Transverse colon (tissue), 4 donors: ENCODE measurements at regions of chr11 and their contacts with region 1.

Region 1: DNA sequence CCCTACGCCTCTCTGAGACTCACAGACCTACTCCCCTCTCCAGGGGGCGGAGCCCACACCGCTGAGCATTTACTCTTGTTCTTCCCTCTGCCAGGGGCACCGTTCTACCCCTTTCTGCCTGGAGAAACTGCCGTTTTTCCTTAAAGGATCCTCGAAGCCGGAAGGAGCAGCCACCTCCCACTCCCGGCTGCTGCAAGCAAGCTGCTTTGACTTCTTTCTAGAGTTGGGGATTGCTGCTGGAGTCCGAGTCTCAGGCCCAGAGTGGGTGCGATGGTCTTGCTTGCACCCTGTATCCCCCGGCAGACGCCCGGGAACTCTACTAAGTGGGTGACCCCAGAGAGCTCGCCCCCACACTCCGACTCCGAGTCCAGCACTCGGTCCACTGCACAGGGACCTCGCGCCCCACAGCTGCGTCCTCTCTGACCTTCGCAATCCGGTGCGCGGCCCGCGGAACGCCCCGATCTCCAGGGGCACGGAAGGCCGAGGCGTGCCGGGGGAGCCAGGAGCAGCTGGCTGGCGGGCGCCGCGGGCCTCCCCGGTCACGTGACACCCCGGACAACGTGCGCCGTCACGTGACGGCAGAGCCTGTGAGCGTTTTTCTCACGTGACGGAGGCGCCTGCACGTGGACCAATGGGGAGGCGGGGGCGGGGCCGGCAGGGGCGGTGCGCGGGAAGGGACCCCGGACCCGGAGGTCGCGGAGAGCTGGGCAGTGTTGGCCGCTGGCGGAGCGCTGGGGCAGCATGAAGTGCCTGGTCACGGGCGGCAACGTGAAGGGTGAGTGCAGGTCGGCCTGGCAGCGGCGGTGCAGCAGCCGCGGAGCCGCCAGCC is at the start of gene RAD9A:
- DNase-seq: peak; percentile 97
- H3K4me3 ChIP-seq: peak within 1 kb of the TSS; percentile 69 to 94 (median 84)
- H3K27ac ChIP-seq: peak within 1 kb of the TSS; percentile 86 to 96 (median 91)
- H3K4me1 ChIP-seq: peaks cover 10 to 33% (median 23%) of the 10 kb centered on the region in 4 donors
- H3K27me3 ChIP-seq: no peaks in the 10 kb centered on the region
- CTCF ChIP-seq: no peak
- EP300 ChIP-seq: peak; percentile 21
- POLR2A ChIP-seq: peak; percentile 84
- total RNA-seq, gene RAD9A: 37.8 to 470 (median 95.3) TPM

Region 2: DNA sequence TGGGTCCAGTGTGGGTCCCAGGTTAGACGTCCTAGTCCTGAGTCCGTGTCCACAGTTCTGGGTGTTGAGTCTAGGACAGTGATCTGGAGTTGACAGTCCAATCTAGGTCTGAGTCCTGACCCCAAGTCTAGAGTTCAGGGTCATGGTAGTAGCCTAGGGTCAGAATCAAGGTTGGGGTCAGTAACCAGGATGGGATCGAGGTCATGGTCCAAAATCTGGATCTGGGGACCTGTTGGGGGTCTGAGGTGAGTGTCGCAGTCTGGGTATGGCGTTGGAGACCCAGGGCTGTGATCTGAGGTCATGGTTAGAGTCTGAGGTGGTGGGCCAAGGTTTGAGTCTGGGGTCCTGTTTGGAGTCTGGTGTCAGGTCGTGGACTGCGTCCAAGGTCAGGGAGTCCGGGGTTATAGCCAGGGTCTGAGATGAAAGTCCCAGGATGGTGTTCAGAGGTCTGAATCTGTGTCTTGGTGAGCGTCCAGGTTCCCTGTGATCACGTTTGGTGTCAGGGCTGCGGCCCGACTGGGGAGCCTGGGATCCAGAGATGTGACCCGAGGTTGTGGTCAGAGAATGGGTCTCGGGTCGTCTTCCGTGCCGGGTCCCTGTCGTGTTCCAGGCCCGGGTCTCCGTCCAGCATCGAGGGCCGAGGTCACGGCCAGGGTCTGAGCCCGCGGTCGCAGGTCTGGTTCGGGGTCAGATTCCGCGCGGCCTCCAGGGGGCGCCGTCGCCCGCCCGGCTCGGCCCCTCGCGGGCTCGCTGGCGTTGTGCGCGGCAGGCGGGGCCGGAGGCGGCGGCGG is 125.7 kb before region 1 on chr11:
- in situ Hi-C with region 1: loop called in 1 of 4 experiments (anchors 25 kb)
- intact Hi-C with region 1: no loop called
- DNase-seq: peak; percentile 85
- H3K4me3 ChIP-seq: no peak overlapping the region
- H3K27ac ChIP-seq: peak overlapping the region; percentile 68 to 78 (median 74)
- H3K4me1 ChIP-seq: peaks cover 45 to 70% (median 63%) of the 10 kb centered on the region in 4 donors
- H3K27me3 ChIP-seq: no peaks in the 10 kb centered on the region
- CTCF ChIP-seq: peak; percentile 67 to 86 (median 72)
- EP300 ChIP-seq: no peak
- POLR2A ChIP-seq: no peak

Region 3: DNA sequence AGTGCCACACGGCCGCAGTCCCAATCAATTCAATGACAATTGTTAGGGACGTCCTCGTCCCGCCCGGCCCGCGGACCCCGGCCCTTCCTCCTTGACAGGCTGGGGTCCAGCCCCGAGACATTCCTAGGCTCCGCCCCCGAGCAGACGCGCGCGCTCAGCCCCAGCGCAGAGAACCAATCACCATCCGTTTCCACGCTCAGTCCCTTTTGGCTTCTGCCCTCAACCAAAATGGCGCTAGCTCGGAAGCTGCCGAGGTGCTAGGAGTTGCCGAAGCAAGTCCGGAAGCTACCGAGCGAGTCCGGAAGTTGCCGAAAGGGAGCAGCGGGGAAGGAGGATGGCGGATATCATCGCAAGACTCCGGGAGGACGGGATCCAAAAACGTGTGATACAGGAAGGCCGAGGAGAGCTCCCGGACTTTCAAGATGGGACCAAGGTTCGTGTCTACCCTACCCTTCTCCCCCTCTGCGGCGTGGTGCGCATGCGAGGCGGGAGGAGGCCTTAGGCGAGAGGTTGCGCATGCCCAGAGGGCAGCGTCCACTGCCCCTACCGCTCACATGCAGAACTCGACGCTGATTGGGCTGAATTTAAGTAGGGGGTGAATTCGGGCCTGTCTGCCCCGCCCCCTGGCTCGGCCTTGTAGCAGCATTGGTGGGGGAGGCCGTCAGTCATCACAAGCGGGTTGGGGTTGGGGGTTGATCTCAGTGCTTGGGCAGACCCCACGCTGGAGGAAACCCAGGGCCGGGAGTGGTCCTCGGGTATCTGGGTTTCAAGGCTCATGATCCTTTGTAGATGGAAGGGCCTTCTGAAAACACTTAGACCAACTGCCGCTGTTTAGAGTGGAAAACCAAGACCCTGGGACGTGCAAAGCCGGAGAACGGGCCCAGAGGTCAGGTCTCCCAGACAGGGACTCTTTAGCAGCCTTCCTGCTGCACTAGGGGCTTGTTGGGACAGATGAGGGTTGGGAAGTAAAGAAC is 91.6 kb after region 1 on chr11 and contains the start of gene AIP:
- in situ Hi-C with region 1: loop called in 2 of 4 experiments (anchors 10 kb)
- intact Hi-C with region 1: no loop called
- DNase-seq: peak; percentile 98
- H3K4me3 ChIP-seq: peak within 1 kb of the TSS; percentile 40 to 62 (median 46)
- H3K27ac ChIP-seq: peak within 1 kb of the TSS; percentile 82 to 90 (median 90)
- H3K4me1 ChIP-seq: peaks cover 15 to 32% (median 25%) of the 10 kb centered on the region in 4 donors
- H3K27me3 ChIP-seq: no peaks in the 10 kb centered on the region
- CTCF ChIP-seq: peak in 3 of 5 experiments; percentile 21 to 69 (median 50)
- EP300 ChIP-seq: no peak
- POLR2A ChIP-seq: peak; percentile 78
- total RNA-seq, gene AIP: 32.9 to 71.5 (median 57.6) TPM

Region 4: GRCh38 chr11:67500831-67501715 is 109.6 kb after region 1 on chr11:
- in situ Hi-C with region 1: no loop called
- intact Hi-C with region 1: no loop called
- DNase-seq: no peak
- H3K4me3 ChIP-seq: no peak overlapping the region
- H3K27ac ChIP-seq: no peak overlapping the region
- H3K4me1 ChIP-seq: peaks cover 13 to 28% (median 18%) of the 10 kb centered on the region in 4 donors
- H3K27me3 ChIP-seq: no peaks in the 10 kb centered on the region
- CTCF ChIP-seq: no peak
- EP300 ChIP-seq: no peak
- POLR2A ChIP-seq: no peak